CD4-positive, alpha-beta memory T cell (primary cell): ENCODE measurements at regions of chr5 and their contacts with region 1.

Region 1: DNA sequence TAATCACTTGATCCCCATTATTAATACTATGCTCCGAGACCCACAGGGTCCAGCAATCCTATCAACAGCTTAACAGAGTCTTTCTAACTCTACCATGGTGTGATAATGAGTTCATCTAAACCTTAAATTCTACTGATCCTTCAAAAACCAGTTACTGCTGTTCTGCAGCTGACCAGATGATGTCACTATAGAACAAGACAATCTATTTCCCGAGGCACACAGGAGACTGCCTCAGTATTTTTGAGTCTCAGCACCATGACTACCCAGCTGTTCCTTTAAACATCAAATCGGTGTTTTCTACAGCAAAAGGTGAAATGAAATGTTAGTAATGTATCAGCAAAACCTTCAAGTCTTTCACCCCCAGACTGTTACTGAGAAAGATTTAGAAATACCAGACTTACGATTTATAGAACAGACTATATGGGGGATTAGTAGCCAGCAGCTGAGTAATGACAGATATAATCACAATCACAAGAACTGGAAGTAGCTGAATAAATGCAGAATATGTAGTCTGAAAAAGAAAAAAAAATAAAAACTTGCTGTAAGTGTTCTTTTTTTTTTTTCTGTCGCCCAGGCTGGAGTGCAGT is 16.9 kb downstream of the DNAJC18 start:
- DNase-seq: peak; percentile 76 to 81 (median 79)
- H3K4me3 ChIP-seq: no peak overlapping the region
- H3K4me3 Mint-ChIP-seq: no peak overlapping the region
- H3K27ac ChIP-seq: no peak overlapping the region
- H3K27ac Mint-ChIP-seq: peak overlapping the region in 6 of 7 donors; percentile 14 to 77 (median 50)
- H3K4me1 ChIP-seq: peaks cover 3% of the 10 kb centered on the region
- H3K4me1 Mint-ChIP-seq: peaks cover 5 to 6% (median 6%) of the 10 kb centered on the region in 4 donors
- H3K27me3 ChIP-seq: no peaks in the 10 kb centered on the region
- H3K27me3 Mint-ChIP-seq: no peaks in the 10 kb centered on the region

Region 2: GRCh38 chr5:139458580-139459406 is 36.4 kb after region 1 on chr5:
- CTCF ChIA-PET with region 1: interaction called, 8 read pairs
- POLR2A ChIA-PET with region 1: interaction called, 4 read pairs
- intact Hi-C with region 1: loop called (anchors 1 kb)
- DNase-seq: peak; percentile 83 to 94 (median 86)
- H3K4me3 ChIP-seq: peak overlapping the region in 1 of 2 donors; percentile 20
- H3K4me3 Mint-ChIP-seq: peak overlapping the region in 7 of 8 donors; percentile 64 to 89 (median 76)
- H3K27ac ChIP-seq: peak overlapping the region; percentile 68
- H3K27ac Mint-ChIP-seq: peak overlapping the region; percentile 91 to 98 (median 96)
- H3K4me1 ChIP-seq: peaks cover 60% of the 10 kb centered on the region
- H3K4me1 Mint-ChIP-seq: peaks cover 39 to 68% (median 53%) of the 10 kb centered on the region in 4 donors
- H3K27me3 ChIP-seq: no peaks in the 10 kb centered on the region
- H3K27me3 Mint-ChIP-seq: no peaks in the 10 kb centered on the region

Region 3: DNA sequence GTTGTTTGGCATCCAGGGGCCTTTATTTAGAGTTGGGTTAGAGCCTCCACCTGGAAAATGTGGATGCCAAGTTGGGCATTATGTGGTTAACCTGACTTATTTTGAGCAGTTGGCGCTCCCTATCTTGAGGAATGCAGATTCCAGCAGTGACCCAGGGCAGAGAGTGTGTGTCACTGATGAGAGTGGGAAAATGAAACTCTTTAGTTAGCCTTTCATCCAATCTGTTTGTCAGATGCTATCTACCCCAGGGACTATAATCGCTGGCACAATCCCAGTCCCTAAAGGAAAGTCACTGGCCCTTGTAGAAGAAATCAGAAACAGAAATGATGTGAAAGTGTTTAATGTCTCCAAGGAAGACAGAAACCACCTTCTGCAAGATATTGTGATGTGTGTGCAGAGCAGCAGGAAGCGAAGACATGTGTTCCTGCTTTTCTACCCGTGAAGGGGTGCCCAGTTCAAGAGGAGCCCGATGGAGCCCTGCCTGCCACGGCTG is 70.3 kb after region 1 on chr5:
- CTCF ChIA-PET with region 1: interaction called, 14 read pairs
- POLR2A ChIA-PET with region 1: no interaction called
- intact Hi-C with region 1: no loop called
- DNase-seq: no peak
- H3K4me3 ChIP-seq: no peak overlapping the region
- H3K4me3 Mint-ChIP-seq: peak overlapping the region in 2 of 8 donors; percentile 20 to 42
- H3K27ac ChIP-seq: no peak overlapping the region
- H3K27ac Mint-ChIP-seq: peak overlapping the region in 2 of 7 donors; percentile 17 to 26
- H3K4me1 ChIP-seq: peaks cover 15% of the 10 kb centered on the region
- H3K4me1 Mint-ChIP-seq: peaks cover 9 to 29% (median 18%) of the 10 kb centered on the region in 4 donors
- H3K27me3 ChIP-seq: no peaks in the 10 kb centered on the region
- H3K27me3 Mint-ChIP-seq: no peaks in the 10 kb centered on the region

Region 4: GRCh38 chr5:139690064-139690802 is 267.8 kb after region 1 on chr5:
- CTCF ChIA-PET with region 1: interaction called, 3 read pairs
- POLR2A ChIA-PET with region 1: no interaction called
- intact Hi-C with region 1: loop called (anchors 1 kb)
- DNase-seq: peak in 2 of 5 donors; percentile 12 to 28
- H3K4me3 ChIP-seq: no peak overlapping the region
- H3K4me3 Mint-ChIP-seq: no peak overlapping the region
- H3K27ac ChIP-seq: no peak overlapping the region
- H3K27ac Mint-ChIP-seq: peak overlapping the region in 1 of 7 donors; percentile 23
- H3K4me1 ChIP-seq: no peaks in the 10 kb centered on the region
- H3K4me1 Mint-ChIP-seq: no peaks in the 10 kb centered on the region
- H3K27me3 ChIP-seq: no peaks in the 10 kb centered on the region
- H3K27me3 Mint-ChIP-seq: peaks cover 0 to 2% of the 10 kb centered on the region in 2 donors